ENCODE measurements at regions of chr1 and their contacts with region 1.

Region 1: DNA sequence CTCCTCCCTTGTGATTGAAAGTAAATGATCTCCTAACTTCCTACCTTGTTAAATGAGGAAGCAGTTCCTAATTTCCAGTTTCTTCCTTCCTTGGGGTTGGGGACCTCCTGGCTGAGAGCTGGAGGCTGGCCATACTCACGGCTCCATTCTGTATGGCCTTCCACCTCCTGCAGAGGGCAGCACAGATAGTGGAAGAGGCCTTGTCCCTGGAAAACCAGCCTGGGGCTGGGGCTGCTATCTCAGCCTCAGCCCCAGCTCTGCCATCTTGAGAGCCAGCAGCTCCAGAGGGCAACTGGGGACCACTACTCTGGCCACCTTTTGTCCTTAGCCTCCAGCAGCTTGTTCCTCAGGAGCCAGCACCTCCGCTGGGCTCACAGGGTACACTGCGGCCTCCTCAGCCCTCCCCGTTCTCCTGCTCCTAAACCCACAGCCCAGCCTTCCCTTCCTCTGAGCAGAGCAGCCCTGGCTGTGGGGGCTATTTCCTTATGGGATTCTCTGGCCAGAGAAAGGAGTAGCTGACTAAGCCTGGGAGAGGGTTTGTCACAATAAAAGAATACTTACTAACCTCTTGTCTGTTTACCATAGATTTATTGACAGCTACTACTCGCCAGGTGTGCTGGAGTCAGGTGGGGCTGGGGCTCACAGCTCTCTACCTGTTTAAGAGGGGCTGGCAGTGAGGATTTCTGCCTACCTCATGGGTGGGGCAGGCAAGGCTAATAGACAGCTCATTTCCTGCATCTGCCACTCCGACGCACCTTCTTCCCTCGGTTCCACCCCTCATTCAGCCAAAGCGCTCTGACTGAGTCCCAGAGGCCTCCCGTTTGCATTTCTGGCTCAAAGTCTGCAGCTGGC is 6.3 kb downstream of the TMEM234 start:
- DNase-seq: peak; percentile 71
- ATAC-seq: peak; percentile 92
- H3K4me3 Mint-ChIP-seq: no peak overlapping the region
- H3K27ac Mint-ChIP-seq: peak overlapping the region; percentile 51
- H3K4me1 Mint-ChIP-seq: peaks cover 10% of the 10 kb centered on the region
- H3K27me3 Mint-ChIP-seq: no peaks in the 10 kb centered on the region

Region 2: DNA sequence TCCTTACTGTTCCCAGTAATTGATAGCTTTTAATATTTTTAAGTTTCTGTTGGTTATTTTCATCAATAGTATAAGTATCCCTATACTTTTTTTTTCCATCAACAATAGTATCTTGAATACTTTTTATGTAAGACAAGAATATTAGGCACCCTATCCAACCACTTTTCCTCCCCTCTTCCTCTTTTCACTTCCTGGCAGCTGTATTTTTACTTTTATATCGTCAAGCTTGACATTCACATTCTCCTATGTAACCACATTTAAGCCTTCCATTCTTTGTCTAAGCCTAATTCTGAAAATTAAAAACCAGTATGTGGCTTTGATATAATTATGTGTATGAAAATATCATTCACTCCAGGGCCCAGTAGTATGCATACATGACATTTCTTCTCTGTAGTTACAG is 133.8 kb before region 1 on chr1:
- CTCF ChIA-PET with region 1: no interaction called
- DNase-seq: no peak
- ATAC-seq: no peak
- H3K4me3 Mint-ChIP-seq: no peak overlapping the region
- H3K27ac Mint-ChIP-seq: no peak overlapping the region
- H3K4me1 Mint-ChIP-seq: no peaks in the 10 kb centered on the region
- H3K27me3 Mint-ChIP-seq: no peaks in the 10 kb centered on the region

Region 3: GRCh38 chr1:32138943-32139342 is 76.9 kb before region 1 on chr1:
- CTCF ChIA-PET with region 1: no interaction called
- DNase-seq: no peak
- ATAC-seq: no peak
- H3K4me3 Mint-ChIP-seq: no peak overlapping the region
- H3K27ac Mint-ChIP-seq: no peak overlapping the region
- H3K4me1 Mint-ChIP-seq: peaks cover 44% of the 10 kb centered on the region
- H3K27me3 Mint-ChIP-seq: no peaks in the 10 kb centered on the region

Region 4: DNA sequence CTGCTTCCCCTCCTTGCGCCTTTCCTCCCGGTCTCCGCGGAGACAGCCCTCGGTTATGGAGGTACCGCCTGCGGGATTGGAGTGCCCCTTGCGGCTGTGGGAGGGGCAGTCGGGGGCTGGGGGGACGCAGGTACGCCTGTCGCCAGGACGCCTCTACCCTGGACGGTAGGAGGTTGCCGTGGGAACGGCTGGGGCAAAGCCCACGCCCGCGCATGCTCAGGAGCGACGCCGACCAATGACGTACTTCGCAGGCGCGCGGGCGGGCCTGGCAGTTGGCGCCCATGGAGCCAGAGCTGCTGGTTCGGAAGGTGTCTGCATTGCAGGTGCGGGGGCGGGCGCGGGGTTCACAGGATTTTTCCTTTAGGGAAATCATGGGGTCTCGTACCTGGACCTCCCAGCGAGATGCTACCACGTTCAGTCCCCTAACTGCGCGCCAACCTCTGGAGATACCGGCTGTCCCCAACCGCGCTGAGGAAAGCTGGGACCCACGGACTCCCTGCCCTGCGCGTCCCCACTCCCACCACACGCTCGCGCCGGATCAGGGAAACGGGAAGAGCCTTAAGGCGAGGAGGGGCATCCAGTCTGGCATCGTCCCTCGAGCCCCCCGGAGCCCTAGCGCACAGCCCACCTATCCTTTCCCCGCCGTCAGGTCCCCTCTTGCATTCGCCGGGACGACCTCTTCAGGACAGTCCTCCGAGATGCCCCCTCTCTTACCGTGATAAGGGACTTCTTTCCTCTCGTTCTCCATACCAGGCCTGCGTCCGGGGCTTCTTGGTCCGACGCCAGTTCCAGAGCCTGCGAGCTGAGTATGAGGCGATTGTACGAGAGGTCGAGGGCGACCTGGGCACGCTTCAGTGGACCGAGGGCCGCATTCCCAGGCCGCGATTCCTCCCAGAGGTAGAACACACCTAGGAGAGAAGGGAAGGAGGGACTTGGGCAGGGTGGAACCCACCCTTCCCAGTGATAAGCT is 10.2 kb before region 1 on chr1 and contains the start of gene IQCC:
- CTCF ChIA-PET with region 1: interaction called, 39 read pairs
- DNase-seq: peak; percentile 89
- ATAC-seq: peak; percentile 82
- H3K4me3 Mint-ChIP-seq: peak within 1 kb of the TSS; percentile 90
- H3K27ac Mint-ChIP-seq: peak within 1 kb of the TSS; percentile 87
- H3K4me1 Mint-ChIP-seq: peaks cover 32% of the 10 kb centered on the region
- H3K27me3 Mint-ChIP-seq: no peaks in the 10 kb centered on the region
- total RNA-seq, gene IQCC: 5.4 to 7.2 TPM

Region 5: DNA sequence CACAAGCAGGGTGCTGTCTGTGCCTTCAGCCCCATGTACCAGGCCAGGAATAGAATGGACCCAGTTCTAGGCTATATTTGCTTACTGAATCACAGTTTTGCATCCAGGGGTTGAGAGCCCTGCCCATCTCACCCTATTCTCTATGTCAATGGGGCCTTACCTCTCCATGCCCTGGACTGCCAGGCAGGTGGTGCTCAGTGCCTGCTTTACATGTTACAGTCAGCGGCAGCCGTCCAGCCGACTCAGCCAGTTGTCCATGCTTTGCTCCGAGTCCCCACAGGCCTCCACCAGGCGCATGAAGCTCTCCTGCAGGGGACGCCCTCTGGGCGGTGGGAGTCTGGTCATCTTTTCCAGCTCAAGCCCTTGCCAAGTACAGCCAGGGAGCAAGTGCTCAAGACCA is 18.9 kb after region 1 on chr1:
- CTCF ChIA-PET with region 1: interaction called, 45 read pairs
- DNase-seq: no peak
- ATAC-seq: no peak
- H3K4me3 Mint-ChIP-seq: no peak overlapping the region
- H3K27ac Mint-ChIP-seq: no peak overlapping the region
- H3K4me1 Mint-ChIP-seq: no peaks in the 10 kb centered on the region
- H3K27me3 Mint-ChIP-seq: no peaks in the 10 kb centered on the region

Region 6: DNA sequence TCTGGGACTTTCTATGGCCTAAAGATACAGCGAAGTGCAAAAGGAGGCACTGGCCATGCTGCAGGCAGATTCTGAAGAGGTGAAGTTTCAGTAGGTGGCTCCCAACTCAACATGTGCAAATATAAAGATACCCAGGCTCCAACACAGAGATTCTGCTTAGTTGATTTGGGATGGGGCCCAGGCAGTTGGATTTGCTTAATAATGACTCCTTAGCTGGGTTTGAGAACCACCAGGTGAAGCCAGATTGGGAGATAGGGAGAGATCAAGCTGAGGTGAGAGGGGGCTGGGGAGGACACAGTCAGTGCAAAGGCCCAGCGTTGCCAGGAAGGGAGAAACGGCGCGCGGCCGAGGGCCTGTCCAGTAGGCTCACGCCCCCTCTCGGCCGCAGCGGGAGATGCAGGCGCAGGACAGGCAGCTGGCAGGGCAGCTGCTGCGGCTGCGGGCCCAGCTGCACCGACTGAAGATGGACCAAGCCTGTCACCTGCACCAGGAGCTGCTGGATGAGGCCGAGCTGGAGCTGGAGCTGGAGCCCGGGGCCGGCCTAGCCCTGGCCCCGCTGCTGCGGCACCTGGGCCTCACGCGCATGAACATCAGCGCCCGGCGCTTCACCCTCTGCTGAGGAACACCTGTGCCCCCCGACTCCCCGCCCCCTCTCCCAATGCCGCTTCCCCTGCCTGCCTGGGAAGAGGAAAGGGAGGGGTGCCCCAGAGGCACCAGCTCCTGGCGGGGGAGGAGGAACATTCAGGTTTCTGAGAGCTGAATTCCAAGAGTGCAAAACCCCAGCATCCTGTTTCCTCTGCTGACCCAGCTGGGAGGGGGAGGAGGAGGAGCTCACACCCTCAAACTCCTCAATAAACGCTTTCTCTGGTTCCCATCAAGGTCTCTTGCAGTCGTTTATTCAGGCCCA is 32.4 kb after region 1 on chr1:
- CTCF ChIA-PET with region 1: interaction called, 99 read pairs
- DNase-seq: peak; percentile 90
- ATAC-seq: peak; percentile 38
- H3K4me3 Mint-ChIP-seq: peak overlapping the region; percentile 57
- H3K27ac Mint-ChIP-seq: peak overlapping the region; percentile 94
- H3K4me1 Mint-ChIP-seq: peaks cover 47% of the 10 kb centered on the region
- H3K27me3 Mint-ChIP-seq: no peaks in the 10 kb centered on the region

Region 7: GRCh38 chr1:32285658-32286057 is 69.8 kb after region 1 on chr1:
- CTCF ChIA-PET with region 1: interaction called, 21 read pairs
- DNase-seq: no peak
- ATAC-seq: no peak
- H3K4me3 Mint-ChIP-seq: no peak overlapping the region
- H3K27ac Mint-ChIP-seq: no peak overlapping the region
- H3K4me1 Mint-ChIP-seq: peaks cover 5% of the 10 kb centered on the region
- H3K27me3 Mint-ChIP-seq: no peaks in the 10 kb centered on the region

Region 8: DNA sequence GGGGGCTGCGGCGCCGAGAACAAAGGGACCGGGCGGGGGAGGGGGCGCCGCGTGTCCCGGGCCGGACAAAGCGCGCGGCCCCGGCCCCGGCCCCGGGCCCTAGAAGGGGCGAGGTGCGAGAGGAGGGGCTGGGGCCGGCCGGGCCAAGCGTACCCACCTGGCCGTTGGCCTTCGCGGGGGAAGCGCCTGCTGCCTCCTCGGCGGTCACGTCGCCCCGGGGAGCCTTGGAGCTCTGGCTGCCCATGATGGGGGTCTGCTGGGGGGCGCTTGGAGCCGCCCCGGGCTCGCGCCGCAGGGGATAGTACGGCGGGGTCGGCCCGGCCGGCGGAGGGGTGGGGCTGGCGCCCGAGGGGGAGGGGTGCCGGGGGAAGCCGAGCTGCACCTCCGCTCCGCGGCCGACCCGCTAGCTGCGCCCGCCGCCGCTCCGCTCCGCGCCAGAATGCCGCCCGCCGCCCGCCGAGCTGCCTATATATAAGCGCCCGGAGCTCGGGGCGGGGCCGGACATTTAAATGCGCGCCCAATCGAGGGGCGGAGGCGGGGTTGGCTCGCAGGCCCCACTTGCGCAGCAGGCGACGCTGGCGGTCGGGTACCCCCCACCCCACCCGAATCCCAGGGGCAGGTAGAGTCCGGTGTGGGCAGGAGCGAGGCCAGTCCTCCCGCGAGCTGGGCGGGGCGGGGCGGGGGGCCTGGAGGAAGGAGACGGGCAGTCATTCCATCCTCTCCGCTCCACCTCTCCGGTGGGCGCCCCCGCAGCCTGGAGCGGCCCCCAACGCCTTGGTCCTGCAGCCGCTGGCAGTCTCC is 120.1 kb after region 1 on chr1 and contains the start of gene MARCKSL1:
- CTCF ChIA-PET with region 1: interaction called, 11 read pairs
- DNase-seq: peak; percentile 81
- ATAC-seq: peak; percentile 73
- H3K4me3 Mint-ChIP-seq: peak within 1 kb of the TSS; percentile 63
- H3K27ac Mint-ChIP-seq: no peak within 1 kb of the TSS
- H3K4me1 Mint-ChIP-seq: peaks cover 34% of the 10 kb centered on the region
- H3K27me3 Mint-ChIP-seq: no peaks in the 10 kb centered on the region
- total RNA-seq, gene MARCKSL1: 11.2 to 11.8 TPM

Region 9: DNA sequence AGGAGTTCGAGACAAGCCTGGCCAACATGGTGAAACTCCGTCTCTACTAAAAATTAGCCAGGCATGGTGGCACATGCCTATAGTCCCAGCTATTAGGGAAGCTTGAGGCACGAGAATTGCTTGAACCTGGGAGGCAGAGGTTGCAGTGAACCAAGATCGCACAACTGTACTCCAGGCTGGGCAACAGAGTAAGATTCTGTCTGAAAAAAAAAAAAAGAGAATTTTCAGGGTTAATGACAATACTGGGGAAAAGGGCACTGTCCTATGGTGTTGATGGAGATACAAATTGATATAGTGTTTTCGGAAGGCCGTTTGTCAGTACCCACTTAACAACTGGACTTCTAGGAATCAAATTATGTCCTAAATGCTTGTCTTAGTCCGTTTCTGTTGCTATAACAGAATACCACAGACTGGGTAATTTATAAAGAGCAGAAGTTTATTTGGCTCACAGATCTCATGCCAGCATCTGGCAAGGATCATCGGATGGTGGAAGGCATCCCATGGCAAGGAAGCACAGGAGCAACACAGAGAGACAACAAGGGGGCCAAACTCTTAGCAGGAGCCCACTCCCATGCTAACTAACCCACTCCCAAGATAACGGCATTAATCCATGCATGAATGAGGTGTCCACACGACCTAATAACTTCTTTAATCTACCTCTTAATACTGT is 364.6 kb after region 1 on chr1:
- CTCF ChIA-PET with region 1: no interaction called
- DNase-seq: no peak
- ATAC-seq: no peak
- H3K4me3 Mint-ChIP-seq: no peak overlapping the region
- H3K27ac Mint-ChIP-seq: no peak overlapping the region
- H3K4me1 Mint-ChIP-seq: no peaks in the 10 kb centered on the region
- H3K27me3 Mint-ChIP-seq: peaks cover 6% of the 10 kb centered on the region